ENCODE measurements at regions of chr5 and their contacts with region 1.

Region 1: GRCh38 chr5:146484714-146485391 is 31.1 kb downstream of the GPR151 start:
- DNase-seq: no peak
- H3K4me3 Mint-ChIP-seq: no peak overlapping the region
- H3K27ac Mint-ChIP-seq: peak overlapping the region; percentile 5
- H3K4me1 Mint-ChIP-seq: no peaks in the 10 kb centered on the region
- H3K27me3 Mint-ChIP-seq: no peaks in the 10 kb centered on the region

Region 2: DNA sequence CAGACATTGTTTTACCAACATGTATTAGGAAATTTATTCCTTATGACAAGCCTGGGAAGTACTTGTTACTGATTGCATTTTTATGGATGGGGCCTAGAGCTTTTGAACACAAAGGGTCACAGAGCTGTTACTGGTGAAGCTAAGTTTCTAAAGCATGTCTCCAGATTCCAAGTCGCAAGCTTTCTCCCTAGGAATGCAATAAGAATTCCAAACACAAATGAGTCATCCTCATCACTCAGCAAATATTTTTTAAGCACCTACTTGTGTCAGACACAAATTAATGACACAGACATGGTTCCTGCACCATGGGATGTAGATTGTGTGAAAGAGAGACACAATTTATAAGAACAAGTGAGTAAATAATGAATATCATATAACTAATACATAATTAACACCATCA is 559.5 kb before region 1 on chr5:
- intact Hi-C with region 1: no loop called
- DNase-seq: no peak
- H3K4me3 Mint-ChIP-seq: no peak overlapping the region
- H3K27ac Mint-ChIP-seq: no peak overlapping the region
- H3K4me1 Mint-ChIP-seq: peaks cover 7% of the 10 kb centered on the region
- H3K27me3 Mint-ChIP-seq: peaks cover 9% of the 10 kb centered on the region

Region 3: GRCh38 chr5:146165460-146165859 is 319.4 kb before region 1 on chr5:
- intact Hi-C with region 1: loop called (anchors 5 kb)
- DNase-seq: no peak
- H3K4me3 Mint-ChIP-seq: no peak overlapping the region
- H3K27ac Mint-ChIP-seq: no peak overlapping the region
- H3K4me1 Mint-ChIP-seq: peaks cover 4% of the 10 kb centered on the region
- H3K27me3 Mint-ChIP-seq: no peaks in the 10 kb centered on the region

Region 4: GRCh38 chr5:146466521-146467349 is 18.1 kb before region 1 on chr5:
- intact Hi-C with region 1: loop called (anchors 2 kb)
- DNase-seq: no peak
- H3K4me3 Mint-ChIP-seq: no peak overlapping the region
- H3K27ac Mint-ChIP-seq: no peak overlapping the region
- H3K4me1 Mint-ChIP-seq: peaks cover 24% of the 10 kb centered on the region
- H3K27me3 Mint-ChIP-seq: no peaks in the 10 kb centered on the region